ENCODE measurements at regions of chr15 and their contacts with region 1.

Region 1: GRCh38 chr15:99282121-99282520 is 30.8 kb downstream of the LRRC28 start:
- DNase-seq: no peak
- H3K4me3 ChIP-seq: no peak overlapping the region
- H3K27ac ChIP-seq: no peak overlapping the region
- H3K4me1 ChIP-seq: no peaks in the 10 kb centered on the region
- H3K27me3 ChIP-seq: no peaks in the 10 kb centered on the region
- CTCF ChIP-seq: no peak
- POLR2A ChIP-seq: no peak

Region 2: DNA sequence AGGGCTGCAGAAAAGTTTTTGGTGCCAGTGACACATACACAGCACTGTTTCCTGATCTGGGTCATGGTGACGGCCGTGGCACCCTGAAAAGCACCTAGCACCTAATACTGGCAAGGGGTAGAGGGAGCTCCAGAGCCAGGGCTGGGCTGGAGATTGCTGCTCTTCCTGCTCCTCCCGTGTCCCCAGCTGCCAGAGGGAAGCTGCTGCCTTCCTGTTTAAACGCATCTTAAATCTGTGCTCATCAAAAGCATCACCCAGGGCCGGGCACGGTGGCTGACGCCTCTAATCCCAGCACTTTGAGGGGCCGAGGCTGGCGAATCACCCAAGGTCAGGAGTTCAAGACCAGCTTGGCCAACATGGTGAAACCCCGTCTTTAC is 127.0 kb after region 1 on chr15:
- intact Hi-C with region 1: loop called in 1 of 2 experiments (anchors 10 kb)
- DNase-seq: peak in 6 of 7 donors; percentile 53 to 82 (median 70)
- H3K4me3 ChIP-seq: no peak overlapping the region
- H3K27ac ChIP-seq: peak overlapping the region in 1 of 5 donors; percentile 9
- H3K4me1 ChIP-seq: peaks cover 0 to 11% of the 10 kb centered on the region in 2 donors
- H3K27me3 ChIP-seq: no peaks in the 10 kb centered on the region
- CTCF ChIP-seq: peak in 5 of 6 experiments; percentile 43 to 63 (median 56)
- POLR2A ChIP-seq: no peak

Region 3: GRCh38 chr15:99708556-99708955 is 426.4 kb after region 1 on chr15:
- intact Hi-C with region 1: loop called in 1 of 2 experiments (anchors 5 kb)
- DNase-seq: peak; percentile 64 to 93 (median 90)
- H3K4me3 ChIP-seq: peak overlapping the region in 1 of 4 donors; percentile 7
- H3K27ac ChIP-seq: peak overlapping the region in 3 of 5 donors; percentile 28 to 49 (median 43)
- H3K4me1 ChIP-seq: peaks cover 11 to 25% of the 10 kb centered on the region in 2 donors
- H3K27me3 ChIP-seq: no peaks in the 10 kb centered on the region
- CTCF ChIP-seq: no peak
- POLR2A ChIP-seq: peak in 1 of 2 donors; percentile 54

Region 4: GRCh38 chr15:99755692-99756409 is 473.7 kb after region 1 on chr15:
- intact Hi-C with region 1: loop called (anchors 5 to 10 kb)
- DNase-seq: peak; percentile 40 to 68 (median 54)
- H3K4me3 ChIP-seq: no peak overlapping the region
- H3K27ac ChIP-seq: no peak overlapping the region
- H3K4me1 ChIP-seq: no peaks in the 10 kb centered on the region
- H3K27me3 ChIP-seq: no peaks in the 10 kb centered on the region
- CTCF ChIP-seq: peak; percentile 72 to 90 (median 78)
- POLR2A ChIP-seq: no peak